Psoas muscle (tissue), 8 donors: ENCODE measurements at regions of chr16 and their contacts with region 1.

Region 1: GRCh38 chr16:21083729-21084268 is 66.8 kb downstream of the DNAH3 start:
- DNase-seq: peak; percentile 64 to 79
- ATAC-seq: peak; percentile 74 to 96 (median 92)
- H3K4me3 ChIP-seq: no peak overlapping the region
- H3K27ac ChIP-seq: no peak overlapping the region
- H3K4me1 ChIP-seq: no peaks in the 10 kb centered on the region
- H3K27me3 ChIP-seq: no peaks in the 10 kb centered on the region
- CTCF ChIP-seq: peak; percentile 65

Region 2: GRCh38 chr16:20806168-20807050 is 277.4 kb before region 1 on chr16 and contains the starts of genes ERI2 and REXO5:
- intact Hi-C with region 1: loop called in 1 of 2 experiments (anchors 5 kb)
- DNase-seq: peak; percentile 89 to 94
- ATAC-seq: peak; percentile 93 to 96 (median 94)
- H3K4me3 ChIP-seq: peak within 1 kb of the TSS; percentile 94
- H3K27ac ChIP-seq: peak within 1 kb of the TSS; percentile 92
- H3K4me1 ChIP-seq: peaks cover 17% of the 10 kb centered on the region
- H3K27me3 ChIP-seq: no peaks in the 10 kb centered on the region
- CTCF ChIP-seq: peak; percentile 25
- total RNA-seq, gene ERI2: 4.2 to 9.5 (median 7.9) TPM
- total RNA-seq, gene REXO5: 0.63 to 1.4 (median 0.92) TPM

Region 3: GRCh38 chr16:20849587-20850390 is 234.0 kb before region 1 on chr16:
- intact Hi-C with region 1: loop called (anchors 1 to 2 kb)
- DNase-seq: peak; percentile 69 to 82
- ATAC-seq: peak; percentile 56 to 74 (median 68)
- H3K4me3 ChIP-seq: no peak overlapping the region
- H3K27ac ChIP-seq: no peak overlapping the region
- H3K4me1 ChIP-seq: peaks cover 15% of the 10 kb centered on the region
- H3K27me3 ChIP-seq: no peaks in the 10 kb centered on the region
- CTCF ChIP-seq: peak; percentile 99

Region 4: GRCh38 chr16:21023509-21024202 is 60.1 kb before region 1 on chr16:
- intact Hi-C with region 1: loop called in 1 of 2 experiments (anchors 10 kb)
- DNase-seq: no peak
- ATAC-seq: no peak
- H3K4me3 ChIP-seq: no peak overlapping the region
- H3K27ac ChIP-seq: no peak overlapping the region
- H3K4me1 ChIP-seq: no peaks in the 10 kb centered on the region
- H3K27me3 ChIP-seq: no peaks in the 10 kb centered on the region
- CTCF ChIP-seq: no peak

Region 5: GRCh38 chr16:21033704-21034103 is 50.1 kb before region 1 on chr16:
- intact Hi-C with region 1: loop called (anchors 10 kb)
- DNase-seq: peak; percentile 16 to 57
- ATAC-seq: peak; percentile 84 to 96 (median 92)
- H3K4me3 ChIP-seq: peak overlapping the region; percentile 18
- H3K27ac ChIP-seq: no peak overlapping the region
- H3K4me1 ChIP-seq: no peaks in the 10 kb centered on the region
- H3K27me3 ChIP-seq: no peaks in the 10 kb centered on the region
- CTCF ChIP-seq: no peak

Region 6: GRCh38 chr16:21244518-21245215 is 160.9 kb after region 1 on chr16:
- intact Hi-C with region 1: no loop called
- DNase-seq: no peak
- ATAC-seq: no peak
- H3K4me3 ChIP-seq: no peak overlapping the region
- H3K27ac ChIP-seq: no peak overlapping the region
- H3K4me1 ChIP-seq: no peaks in the 10 kb centered on the region
- H3K27me3 ChIP-seq: no peaks in the 10 kb centered on the region
- CTCF ChIP-seq: no peak